ENCODE measurements at regions of chr16 and their contacts with region 1.

Region 1: DNA sequence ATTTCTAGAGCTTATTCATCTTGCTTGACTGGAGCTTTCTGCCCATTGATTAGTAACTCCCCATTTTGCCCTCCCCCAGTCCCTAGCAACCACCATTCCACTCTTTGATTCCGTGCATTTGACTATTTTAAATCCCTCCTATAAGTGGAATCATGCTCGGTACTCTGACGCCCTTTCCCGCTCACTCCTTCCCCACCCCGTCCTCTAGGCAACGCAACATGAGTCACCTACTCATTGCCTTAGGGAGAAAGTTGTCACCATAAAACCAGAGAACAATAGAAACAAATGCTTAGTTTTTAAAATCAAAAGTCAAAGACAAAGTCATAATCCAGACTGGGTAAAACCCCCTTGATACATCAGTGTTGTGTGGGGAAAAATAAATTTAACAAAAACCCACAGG is 45.5 kb upstream of the RBBP6 start:
- DNase-seq: no peak
- H3K4me3 ChIP-seq: no peak overlapping the region
- H3K27ac ChIP-seq: no peak overlapping the region
- H3K4me1 ChIP-seq: no peaks in the 10 kb centered on the region; a peak in 1 of 4 replicates
- H3K27me3 ChIP-seq: no peaks in the 10 kb centered on the region; the same call in 1 of the 2 replicates
- CTCF ChIP-seq: no peak
- EP300 ChIP-seq: no peak
- RAD21 ChIP-seq: no peak

Region 2: DNA sequence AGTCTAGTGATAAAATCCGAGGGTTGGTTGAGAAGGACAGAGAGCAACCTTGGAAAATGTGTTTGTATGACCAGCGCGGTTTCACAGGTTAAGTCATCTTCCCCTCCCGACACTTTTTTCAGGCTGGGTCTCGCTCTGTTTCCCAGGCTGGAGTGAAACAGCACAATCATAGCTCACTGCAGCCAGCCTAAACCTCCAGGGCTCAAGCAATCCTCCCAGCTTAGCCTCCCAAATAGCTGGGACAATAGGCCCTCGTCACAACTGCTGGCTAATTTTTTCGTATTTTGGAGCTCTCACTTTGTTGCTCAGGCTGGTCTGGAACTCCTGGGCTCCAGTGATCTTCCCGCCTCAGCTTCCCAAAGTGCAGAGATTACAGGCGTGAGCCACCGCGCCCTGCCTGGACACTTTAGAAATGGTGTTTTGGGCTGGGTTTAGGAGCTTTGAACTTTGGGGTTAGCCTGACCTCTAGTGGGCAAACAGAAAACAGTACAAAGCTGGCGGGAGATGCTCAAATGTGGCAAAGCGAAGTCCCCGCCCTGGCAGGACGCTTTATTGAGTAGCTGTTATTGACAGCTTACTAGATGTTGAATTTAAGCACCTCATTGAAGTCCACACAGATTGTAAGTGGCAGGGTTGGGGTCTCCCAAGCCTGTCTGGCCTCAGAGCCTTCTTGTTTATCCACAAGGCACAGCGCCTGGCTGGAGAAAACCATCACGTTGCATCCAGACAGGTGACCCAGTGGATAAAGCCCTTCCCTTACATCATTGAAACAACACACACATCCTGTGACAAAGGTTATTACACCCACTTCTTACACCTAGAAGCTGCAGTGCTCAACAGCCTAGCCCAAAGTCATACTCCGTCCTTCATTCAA is 10.8 kb after region 1 on chr16:
- CTCF ChIA-PET with region 1: interaction called, 21 read pairs
- POLR2A ChIA-PET with region 1: no interaction called
- DNase-seq: peak; percentile 64
- H3K4me3 ChIP-seq: peak overlapping the region in 1 of 2 experiments; percentile 49; a peak in 1 of 4 replicates
- H3K27ac ChIP-seq: no peak overlapping the region
- H3K4me1 ChIP-seq: peaks cover 0 to 4% of the 10 kb centered on the region in 2 experiments; a peak in 1 of 4 replicates
- H3K27me3 ChIP-seq: no peaks in the 10 kb centered on the region
- CTCF ChIP-seq: peak; percentile 80
- EP300 ChIP-seq: no peak
- RAD21 ChIP-seq: peak; percentile 91

Region 3: DNA sequence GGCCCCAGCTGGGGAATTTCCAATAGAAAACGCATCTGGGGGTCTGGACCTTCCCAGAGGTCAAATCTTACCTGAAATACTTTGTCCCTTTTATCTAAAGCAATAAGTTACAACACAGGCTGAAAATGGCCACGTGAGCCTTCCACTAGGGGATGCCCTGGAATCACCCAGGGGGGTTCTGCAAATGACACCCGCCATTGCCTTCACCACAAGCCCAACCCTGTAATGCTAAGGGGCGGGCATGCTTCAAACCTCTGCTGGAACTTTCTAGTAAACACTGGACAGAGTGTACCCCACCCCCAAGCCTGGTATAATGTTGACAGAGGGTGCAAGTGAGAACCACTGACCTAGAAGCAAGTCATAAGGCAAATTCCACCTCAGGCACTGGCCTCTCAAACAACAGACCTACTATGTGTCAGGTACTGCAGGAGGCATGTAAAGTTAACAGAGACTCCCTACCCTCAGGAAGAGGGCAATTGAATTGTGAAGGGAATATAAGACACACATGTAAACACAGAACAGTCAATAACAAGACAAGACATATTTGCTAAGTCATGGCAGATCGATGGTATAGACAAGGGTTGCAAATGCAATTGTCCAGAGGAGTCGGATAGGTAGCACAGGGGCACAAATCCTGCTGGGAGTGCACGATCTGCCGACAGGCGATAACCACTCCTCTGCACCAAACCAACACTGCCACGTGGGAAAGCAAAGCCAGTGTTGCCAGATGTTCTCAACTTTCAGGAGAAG is 462.3 kb after region 1 on chr16:
- CTCF ChIA-PET with region 1: no interaction called
- POLR2A ChIA-PET with region 1: no interaction called
- DNase-seq: no peak
- H3K4me3 ChIP-seq: no peak overlapping the region
- H3K27ac ChIP-seq: no peak overlapping the region
- H3K4me1 ChIP-seq: no peaks in the 10 kb centered on the region
- H3K27me3 ChIP-seq: no peaks in the 10 kb centered on the region
- CTCF ChIP-seq: no peak
- EP300 ChIP-seq: no peak
- RAD21 ChIP-seq: 0 out of 2 replicates have a peak, but pooled peaks have one; percentile 20